Activated T-helper 1 cell treated with anti-CD3 and anti-CD28 coated beads, Interleukin-12 subunit alpha, Interleukin-12 subunit beta, Interleukin-2, Interleukin-4 antibody, amounts not matched to agents 30 ng/mL and 10 ng/mL and 1 ng/mL, durations not matched to agents 14 hours and 24 hours and 36 hours (primary cell): ENCODE measurements at regions of chr13 and their contacts with region 1.

Region 1: GRCh38 chr13:98672944-98673545 is 79.4 kb downstream of the SLC15A1 start:
- DNase-seq: peak; percentile 32
- H3K4me3 Mint-ChIP-seq: no peak overlapping the region
- H3K27ac Mint-ChIP-seq: no peak overlapping the region
- H3K4me1 Mint-ChIP-seq: no peaks in the 10 kb centered on the region
- H3K27me3 Mint-ChIP-seq: peaks cover 16% of the 10 kb centered on the region

Region 2: DNA sequence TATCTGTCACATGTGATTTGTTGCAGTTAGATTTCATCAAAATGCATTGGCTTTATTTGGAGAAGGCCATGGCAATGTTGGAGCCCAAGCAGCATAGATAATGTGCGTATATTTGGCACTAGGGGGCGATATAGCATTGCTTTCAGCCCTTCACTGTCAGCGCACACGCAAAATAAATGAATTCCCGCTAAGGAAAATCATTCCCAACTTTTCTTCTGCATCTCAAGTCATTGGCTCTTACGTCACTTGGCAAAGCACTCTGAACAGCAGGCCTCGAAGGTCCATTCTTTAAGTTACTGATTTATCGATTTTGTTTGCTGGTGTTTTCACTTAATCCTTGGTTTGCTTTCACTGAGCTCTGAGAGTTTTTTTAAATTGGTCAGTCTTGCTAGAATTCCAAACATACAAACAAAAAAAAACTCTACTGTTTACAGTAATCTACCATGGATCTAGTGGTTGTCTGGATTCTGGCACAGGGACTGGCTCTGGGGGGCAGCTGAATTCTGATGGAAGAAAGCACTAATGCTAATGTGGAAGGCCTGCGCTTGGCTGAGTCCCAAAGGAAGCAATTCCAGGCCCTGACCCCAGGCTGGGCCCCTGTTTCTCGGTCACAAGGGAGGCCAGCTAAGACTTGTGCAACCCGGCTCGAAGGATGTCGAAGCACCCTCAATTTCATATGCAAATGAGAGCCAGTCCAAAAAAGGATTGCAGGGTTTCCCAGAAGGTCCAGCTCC is 817.3 kb before region 1 on chr13:
- intact Hi-C with region 1: no loop called
- DNase-seq: no peak
- H3K4me3 Mint-ChIP-seq: no peak overlapping the region
- H3K27ac Mint-ChIP-seq: no peak overlapping the region
- H3K4me1 Mint-ChIP-seq: no peaks in the 10 kb centered on the region
- H3K27me3 Mint-ChIP-seq: peaks cover 6% of the 10 kb centered on the region

Region 3: DNA sequence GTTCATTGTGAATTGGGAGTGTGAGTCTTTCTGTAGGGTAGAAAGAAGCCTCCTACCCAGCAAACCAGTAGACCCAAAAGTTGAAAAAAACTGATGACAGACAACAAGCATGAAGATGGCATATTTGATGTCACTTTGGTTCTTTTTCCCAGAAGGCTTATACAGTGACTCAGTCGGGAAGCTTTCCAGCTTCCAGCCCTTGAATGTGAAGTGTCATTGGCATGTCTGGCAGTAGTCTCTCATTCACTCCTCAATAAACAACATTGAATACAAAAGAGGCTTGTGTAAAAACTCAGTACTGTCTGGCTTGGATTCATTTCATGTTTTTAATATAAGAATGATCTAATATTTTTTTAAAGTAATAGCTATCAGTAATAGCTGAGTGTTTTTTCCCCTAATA is 650.8 kb before region 1 on chr13:
- intact Hi-C with region 1: loop called (anchors 10 kb)
- DNase-seq: no peak
- H3K4me3 Mint-ChIP-seq: no peak overlapping the region
- H3K27ac Mint-ChIP-seq: no peak overlapping the region
- H3K4me1 Mint-ChIP-seq: no peaks in the 10 kb centered on the region
- H3K27me3 Mint-ChIP-seq: no peaks in the 10 kb centered on the region

Region 4: DNA sequence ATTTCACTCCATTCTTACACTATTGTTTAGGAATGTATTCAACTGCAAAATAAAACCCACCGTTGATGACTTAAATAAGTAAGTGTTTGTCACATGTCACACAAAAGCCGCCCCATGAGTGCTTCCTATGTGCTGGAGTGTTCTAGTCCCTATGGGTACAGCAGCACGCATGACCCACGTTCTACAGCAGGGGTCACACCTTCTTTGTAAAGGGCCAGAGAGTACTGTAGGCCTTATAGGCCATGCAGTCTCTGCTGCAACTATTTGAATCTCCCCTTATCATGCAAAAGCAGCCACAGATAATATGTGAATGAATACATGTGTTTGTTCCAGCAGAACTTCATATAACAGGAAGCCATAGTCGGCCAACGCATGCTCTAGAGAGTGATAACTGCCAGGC is 327.5 kb before region 1 on chr13:
- intact Hi-C with region 1: loop called (anchors 1 kb)
- DNase-seq: no peak
- H3K4me3 Mint-ChIP-seq: no peak overlapping the region
- H3K27ac Mint-ChIP-seq: no peak overlapping the region
- H3K4me1 Mint-ChIP-seq: no peaks in the 10 kb centered on the region
- H3K27me3 Mint-ChIP-seq: no peaks in the 10 kb centered on the region

Region 5: DNA sequence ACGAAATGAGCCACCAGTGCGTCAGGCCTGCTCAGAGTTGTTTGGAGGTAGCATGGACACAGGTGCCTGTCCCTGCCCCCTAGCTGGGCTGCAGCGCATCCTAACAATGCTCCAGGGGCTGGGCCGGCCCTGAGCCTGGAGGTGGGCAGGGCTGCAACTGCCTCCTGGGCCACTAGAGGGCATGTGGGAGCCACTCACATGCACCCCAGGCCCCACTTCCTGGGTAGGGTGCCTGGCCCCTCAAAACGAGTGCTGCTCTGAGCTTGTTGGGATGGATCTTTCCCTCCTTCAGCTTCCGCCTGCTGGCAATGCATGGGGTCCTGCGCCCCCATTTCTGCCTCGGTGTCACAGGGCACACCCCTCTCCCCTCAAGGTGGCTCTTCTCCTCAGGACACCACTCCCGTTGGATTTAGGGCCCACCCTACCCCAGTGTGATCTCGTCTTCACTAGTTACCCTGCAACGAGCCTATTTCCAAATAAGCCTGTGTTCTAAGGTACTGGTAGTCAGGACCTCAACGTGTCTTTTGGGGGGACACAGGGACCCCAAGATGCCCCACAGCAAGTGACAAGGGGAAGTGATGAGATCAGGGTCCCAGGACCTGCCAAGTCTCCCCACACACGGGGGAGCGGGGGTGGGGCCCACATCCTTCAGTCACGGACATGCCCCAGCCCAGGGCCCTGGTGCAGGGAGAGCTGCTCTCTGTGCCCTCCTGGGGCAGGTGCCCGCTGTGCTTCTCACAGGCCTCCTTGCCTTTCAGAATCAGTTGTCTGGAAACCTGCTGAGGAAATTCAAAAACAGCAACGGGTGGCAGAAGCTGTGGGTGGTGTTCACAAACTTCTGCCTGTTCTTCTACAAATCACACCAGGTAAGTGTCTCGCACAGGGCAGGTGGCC is 227.5 kb before region 1 on chr13:
- intact Hi-C with region 1: loop called (anchors 1 kb)
- DNase-seq: peak; percentile 62
- H3K4me3 Mint-ChIP-seq: no peak overlapping the region
- H3K27ac Mint-ChIP-seq: peak overlapping the region; percentile 58
- H3K4me1 Mint-ChIP-seq: peaks cover 8% of the 10 kb centered on the region
- H3K27me3 Mint-ChIP-seq: no peaks in the 10 kb centered on the region